BJ (cell line): ENCODE measurements at regions of chr4 and their contacts with region 1.

Region 1: DNA sequence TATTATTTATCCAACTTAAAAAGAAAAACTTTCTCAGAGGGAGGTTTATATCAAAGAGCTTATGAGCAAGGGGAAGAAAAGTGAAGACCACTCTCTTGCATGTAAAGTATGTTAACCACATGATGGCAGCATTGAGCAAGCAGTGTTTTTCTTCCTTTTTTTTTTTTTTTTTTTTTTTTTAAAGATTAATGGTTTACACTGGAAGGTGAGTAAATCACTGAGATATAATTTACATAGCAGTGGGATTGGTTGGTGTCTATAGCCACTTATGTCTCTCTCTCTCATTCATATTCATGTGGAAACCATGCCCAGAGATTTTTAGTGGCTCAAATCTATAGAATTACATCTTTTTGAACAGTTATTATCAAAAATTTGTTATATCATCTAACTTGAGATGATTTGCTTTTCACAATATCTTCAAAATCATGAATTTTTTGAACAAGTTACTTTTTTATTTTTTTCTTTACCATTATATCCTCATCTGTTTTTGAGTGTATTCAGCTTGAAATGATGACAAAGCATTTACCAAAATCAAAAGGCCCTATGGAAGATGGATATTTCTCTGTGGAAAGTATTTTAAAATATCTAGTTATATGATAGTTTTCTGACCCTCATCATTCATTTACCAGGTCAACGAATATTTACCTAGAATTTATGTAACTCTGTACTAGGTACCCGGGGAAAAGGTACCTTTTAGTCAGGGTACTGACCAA is 31.6 kb downstream of the MTHFD2L start:
- DNase-seq: peak; percentile 7
- H3K4me3 ChIP-seq: no peak overlapping the region
- H3K27me3 ChIP-seq: no peaks in the 10 kb centered on the region
- CTCF ChIP-seq: peak; percentile 69

Region 2: DNA sequence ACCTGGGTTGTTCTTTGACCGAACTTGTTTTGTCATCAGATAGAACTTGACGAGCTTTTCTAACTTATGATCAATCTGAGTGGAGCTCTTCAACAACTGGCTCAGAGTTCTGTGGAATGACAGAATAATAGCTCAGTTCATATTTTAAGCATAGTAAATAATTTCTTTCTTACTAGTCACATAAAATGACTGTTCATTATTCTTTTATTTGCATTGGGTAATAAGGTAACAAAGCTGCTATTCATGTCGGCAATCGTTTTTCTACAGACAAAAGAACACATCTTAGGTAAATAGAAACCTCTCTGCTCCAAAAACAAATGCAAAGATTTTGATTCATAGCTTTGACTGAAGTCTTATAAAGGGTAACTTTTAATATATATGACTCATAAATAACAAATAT is 506.5 kb before region 1 on chr4:
- CTCF ChIA-PET with region 1: no interaction called
- POLR2A ChIA-PET with region 1: interaction called, 11 read pairs
- DNase-seq: no peak
- H3K4me3 ChIP-seq: no peak overlapping the region
- H3K27me3 ChIP-seq: no peaks in the 10 kb centered on the region
- CTCF ChIP-seq: no peak

Region 3: DNA sequence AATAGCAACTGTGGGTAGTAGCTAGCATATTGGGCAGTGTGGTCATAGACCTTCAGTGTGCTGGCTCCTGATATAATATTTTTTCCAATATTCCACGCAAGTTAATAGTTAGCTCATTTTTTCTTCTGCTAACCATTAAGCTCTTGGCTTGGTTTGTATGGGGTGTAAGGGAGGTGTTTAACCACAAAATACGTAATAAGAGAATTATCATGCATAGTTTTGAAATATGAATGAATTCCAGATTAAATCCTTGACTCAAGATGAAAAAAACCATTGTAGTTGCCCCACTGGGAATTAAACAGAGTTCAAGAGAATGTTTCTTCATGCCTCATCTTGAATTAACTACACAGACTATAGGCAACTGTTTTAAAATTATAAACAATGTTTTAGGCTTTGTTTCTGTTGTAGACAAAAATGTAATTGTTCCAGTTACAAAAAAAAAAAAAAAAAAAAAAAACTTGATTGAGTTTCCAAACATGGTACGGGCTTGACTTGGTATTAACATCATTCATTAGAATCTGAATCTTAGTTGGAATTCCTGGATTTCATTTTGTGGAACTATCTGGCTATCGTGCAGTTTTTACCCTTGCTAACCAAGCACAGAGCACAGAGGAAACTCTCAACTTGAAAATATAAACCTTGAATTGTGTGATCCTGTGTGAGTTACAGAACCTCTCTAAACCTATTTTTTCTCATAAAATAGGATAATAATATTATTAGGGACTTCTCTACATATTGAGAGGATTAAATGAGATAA is 291.9 kb before region 1 on chr4:
- CTCF ChIA-PET with region 1: no interaction called
- POLR2A ChIA-PET with region 1: no interaction called
- DNase-seq: no peak
- H3K4me3 ChIP-seq: no peak overlapping the region
- H3K27me3 ChIP-seq: no peaks in the 10 kb centered on the region
- CTCF ChIP-seq: no peak

Region 4: GRCh38 chr4:74311696-74312313 is 122.3 kb after region 1 on chr4:
- CTCF ChIA-PET with region 1: interaction called, 15 read pairs
- POLR2A ChIA-PET with region 1: no interaction called
- DNase-seq: no peak
- H3K4me3 ChIP-seq: no peak overlapping the region
- H3K27me3 ChIP-seq: no peaks in the 10 kb centered on the region
- CTCF ChIP-seq: peak; percentile 69

Region 5: DNA sequence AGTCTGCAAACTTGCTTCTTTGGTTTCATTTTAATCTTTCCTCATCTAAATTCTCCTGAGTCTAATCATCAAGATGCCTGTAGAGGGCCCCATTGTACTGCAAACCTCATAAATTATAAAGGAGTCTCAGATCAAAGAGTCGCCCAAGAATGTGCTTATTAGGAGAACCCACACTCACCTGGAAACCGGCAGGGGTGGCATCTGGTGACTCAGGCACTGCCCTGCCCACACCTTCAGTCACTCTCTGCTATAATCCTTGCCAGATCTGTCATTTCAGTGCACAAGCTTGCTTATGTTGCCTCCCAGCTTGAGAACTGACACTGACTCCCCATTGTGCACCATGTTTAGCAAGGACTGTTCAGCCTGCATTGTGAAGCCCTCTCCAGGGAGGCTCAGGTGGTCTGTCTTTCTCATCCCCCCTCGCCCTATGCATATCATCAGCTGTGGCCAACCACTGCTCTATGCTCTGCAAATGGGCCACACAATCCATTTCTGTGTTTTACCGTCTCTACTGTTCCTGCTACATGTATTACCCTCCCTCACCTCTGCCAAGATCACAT is 131.2 kb after region 1 on chr4:
- CTCF ChIA-PET with region 1: interaction called, 15 read pairs
- POLR2A ChIA-PET with region 1: no interaction called
- DNase-seq: no peak
- H3K4me3 ChIP-seq: no peak overlapping the region
- H3K27me3 ChIP-seq: 0 out of 2 replicates have a peak, but pooled peaks cover 1% of the 10 kb centered on the region
- CTCF ChIP-seq: peak; percentile 61